ENCODE measurements at regions of chr1 and their contacts with region 1.

Region 1: GRCh38 chr1:197521118-197521739 is 253.2 kb downstream of the CRB1 start:
- DNase-seq: peak in 3 of 9 experiments; percentile 19 to 59 (median 44)
- ATAC-seq: peak; percentile 52
- H3K4me3 ChIP-seq: no peak overlapping the region
- H3K4me3 Mint-ChIP-seq: no peak overlapping the region
- H3K27ac ChIP-seq: no peak overlapping the region
- H3K27ac Mint-ChIP-seq: no peak overlapping the region
- H3K4me1 ChIP-seq: no peaks in the 10 kb centered on the region
- H3K4me1 Mint-ChIP-seq: no peaks in the 10 kb centered on the region
- H3K27me3 ChIP-seq: no peaks in the 10 kb centered on the region
- H3K27me3 Mint-ChIP-seq: no peaks in the 10 kb centered on the region
- CTCF ChIP-seq: peak; percentile 87

Region 2: GRCh38 chr1:197180252-197180878 is 340.9 kb before region 1 on chr1:
- CTCF ChIA-PET with region 1: interaction called, 7 read pairs
- POLR2A ChIA-PET with region 1: no interaction called
- intact Hi-C with region 1: loop called (anchors 5 to 10 kb)
- DNase-seq: peak in 2 of 9 experiments; percentile 40 to 59
- ATAC-seq: peak; percentile 62
- H3K4me3 ChIP-seq: no peak overlapping the region
- H3K4me3 Mint-ChIP-seq: no peak overlapping the region
- H3K27ac ChIP-seq: no peak overlapping the region
- H3K27ac Mint-ChIP-seq: no peak overlapping the region
- H3K4me1 ChIP-seq: no peaks in the 10 kb centered on the region
- H3K4me1 Mint-ChIP-seq: peaks cover 13% of the 10 kb centered on the region
- H3K27me3 ChIP-seq: no peaks in the 10 kb centered on the region
- H3K27me3 Mint-ChIP-seq: no peaks in the 10 kb centered on the region
- CTCF ChIP-seq: peak; percentile 66

Region 3: GRCh38 chr1:197374428-197374827 is 146.8 kb before region 1 on chr1:
- CTCF ChIA-PET with region 1: no interaction called
- POLR2A ChIA-PET with region 1: no interaction called
- intact Hi-C with region 1: no loop called
- DNase-seq: no peak
- ATAC-seq: peak; percentile 31
- H3K4me3 ChIP-seq: no peak overlapping the region
- H3K4me3 Mint-ChIP-seq: no peak overlapping the region
- H3K27ac ChIP-seq: no peak overlapping the region
- H3K27ac Mint-ChIP-seq: no peak overlapping the region
- H3K4me1 ChIP-seq: no peaks in the 10 kb centered on the region
- H3K4me1 Mint-ChIP-seq: peaks cover 6% of the 10 kb centered on the region
- H3K27me3 ChIP-seq: no peaks in the 10 kb centered on the region
- H3K27me3 Mint-ChIP-seq: peaks cover 3% of the 10 kb centered on the region
- CTCF ChIP-seq: no peak

Region 4: DNA sequence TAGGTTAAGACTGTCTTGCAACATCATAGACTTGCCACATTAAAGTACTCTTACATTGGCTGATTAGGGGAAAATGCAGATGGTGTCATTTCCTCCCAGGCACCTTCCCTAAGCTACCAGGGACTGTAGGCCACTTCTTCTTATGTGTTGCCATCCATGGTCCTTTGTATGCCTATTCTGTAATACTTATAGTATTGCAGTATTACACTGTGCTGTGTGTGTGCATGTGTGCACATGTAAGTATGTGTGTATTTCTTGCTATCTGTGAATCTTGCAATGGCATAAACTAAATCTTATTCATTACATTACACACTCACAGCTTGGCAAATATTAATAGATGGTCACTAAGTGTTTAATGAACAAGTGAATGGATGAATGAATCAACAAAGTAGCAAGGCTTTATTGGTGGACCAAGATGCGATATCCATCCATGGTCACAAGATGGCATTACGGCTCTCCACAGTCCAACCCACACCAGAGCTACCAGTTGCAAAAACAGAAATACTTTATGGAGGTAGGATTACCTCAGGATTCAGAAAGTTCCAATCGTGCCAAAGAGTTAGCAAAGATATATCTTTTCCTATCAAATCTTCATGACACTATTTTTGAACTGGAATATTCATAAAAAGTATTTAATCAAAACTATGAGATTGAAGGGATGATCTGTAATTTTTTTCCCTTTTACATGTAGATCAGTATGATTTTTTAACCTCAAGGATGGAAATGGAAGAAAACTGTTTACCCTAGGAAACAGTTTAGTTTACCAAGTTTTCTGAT is 93.9 kb after region 1 on chr1:
- CTCF ChIA-PET with region 1: interaction called, 3 read pairs
- POLR2A ChIA-PET with region 1: no interaction called
- intact Hi-C with region 1: loop called in 1 of 2 experiments (anchors 5 kb)
- DNase-seq: peak in 4 of 9 experiments; percentile 7 to 49 (median 28)
- ATAC-seq: peak; percentile 46
- H3K4me3 ChIP-seq: no peak overlapping the region
- H3K4me3 Mint-ChIP-seq: no peak overlapping the region
- H3K27ac ChIP-seq: no peak overlapping the region
- H3K27ac Mint-ChIP-seq: no peak overlapping the region
- H3K4me1 ChIP-seq: no peaks in the 10 kb centered on the region
- H3K4me1 Mint-ChIP-seq: no peaks in the 10 kb centered on the region
- H3K27me3 ChIP-seq: no peaks in the 10 kb centered on the region
- H3K27me3 Mint-ChIP-seq: no peaks in the 10 kb centered on the region
- CTCF ChIP-seq: peak; percentile 49

Region 5: DNA sequence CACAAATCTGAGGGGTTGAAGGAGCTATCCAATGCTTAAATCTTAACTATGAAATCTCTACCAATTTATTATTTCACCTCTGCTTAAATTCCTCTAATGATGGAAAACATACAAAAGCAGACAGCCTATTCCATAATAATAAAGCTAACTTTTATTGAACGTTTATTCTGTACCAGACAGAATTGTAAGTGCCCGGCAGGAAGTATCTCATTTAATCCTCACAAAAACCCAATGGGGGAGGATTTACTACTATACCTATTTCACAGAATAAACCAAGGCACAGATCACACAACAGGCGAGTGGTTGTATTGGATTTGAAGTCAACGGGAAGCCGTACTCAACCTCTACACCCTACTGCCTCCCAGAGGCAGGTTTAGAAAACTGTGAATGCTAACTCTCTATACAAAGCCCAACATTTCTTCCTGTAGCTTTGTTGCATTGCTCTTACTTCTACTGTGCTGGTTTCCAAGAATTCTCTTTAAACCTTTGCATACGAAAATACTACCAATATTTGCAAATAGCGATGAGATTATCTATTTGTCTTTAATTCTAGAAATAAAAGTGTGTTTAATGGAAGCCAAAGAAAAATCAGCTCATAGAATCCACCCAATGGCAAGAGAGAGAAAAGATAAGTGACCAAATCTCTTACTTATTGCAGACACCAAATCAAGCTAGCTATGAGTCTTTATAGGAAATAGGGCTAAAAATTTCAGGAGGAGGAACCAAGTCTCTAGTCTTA is 347.7 kb after region 1 on chr1:
- CTCF ChIA-PET with region 1: interaction called, 22 read pairs
- POLR2A ChIA-PET with region 1: no interaction called
- intact Hi-C with region 1: loop called (anchors 1 to 5 kb)
- DNase-seq: peak in 6 of 9 experiments; percentile 2 to 66 (median 30)
- ATAC-seq: peak; percentile 91
- H3K4me3 ChIP-seq: no peak overlapping the region
- H3K4me3 Mint-ChIP-seq: no peak overlapping the region
- H3K27ac ChIP-seq: no peak overlapping the region
- H3K27ac Mint-ChIP-seq: no peak overlapping the region
- H3K4me1 ChIP-seq: no peaks in the 10 kb centered on the region
- H3K4me1 Mint-ChIP-seq: no peaks in the 10 kb centered on the region
- H3K27me3 ChIP-seq: no peaks in the 10 kb centered on the region
- H3K27me3 Mint-ChIP-seq: peaks cover 6% of the 10 kb centered on the region
- CTCF ChIP-seq: peak; percentile 79

Region 6: DNA sequence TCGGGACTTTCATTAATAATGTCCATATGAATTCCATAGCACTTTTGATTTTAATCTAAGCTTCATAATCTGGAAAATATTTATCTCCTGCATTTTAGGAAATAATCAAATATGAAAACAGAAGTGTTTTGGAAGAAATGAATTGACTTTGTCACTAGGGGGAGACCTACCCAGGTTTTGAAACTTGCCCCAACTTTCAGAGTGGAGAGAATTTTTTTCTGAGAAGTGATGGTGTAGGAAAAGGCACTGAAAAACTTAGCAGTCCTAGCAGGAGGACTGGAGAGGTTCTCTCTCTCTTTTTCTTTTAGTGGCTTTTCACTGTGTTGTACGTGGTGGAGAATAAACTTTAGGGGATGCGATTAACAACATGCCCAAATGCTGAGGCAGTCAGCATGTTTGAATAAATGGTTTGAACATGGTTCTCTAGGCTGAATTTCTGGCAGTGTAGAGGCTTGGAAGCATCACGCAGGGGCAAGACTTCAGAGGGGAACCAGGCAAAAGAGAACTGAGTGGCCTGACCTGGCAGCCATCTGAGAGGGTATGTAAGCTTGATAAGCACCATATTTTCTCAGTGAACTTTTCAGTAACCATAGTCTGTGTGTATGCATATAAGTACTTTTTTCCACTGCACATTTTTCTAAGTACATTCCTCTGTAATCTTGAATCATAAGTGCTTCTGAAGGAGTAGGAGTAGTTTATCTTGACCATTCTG is 567.3 kb after region 1 on chr1:
- CTCF ChIA-PET with region 1: no interaction called
- POLR2A ChIA-PET with region 1: no interaction called
- intact Hi-C with region 1: loop called (anchors 10 kb)
- DNase-seq: peak in 4 of 9 experiments; percentile 7 to 66 (median 30)
- ATAC-seq: peak; percentile 51
- H3K4me3 ChIP-seq: no peak overlapping the region
- H3K4me3 Mint-ChIP-seq: no peak overlapping the region
- H3K27ac ChIP-seq: no peak overlapping the region
- H3K27ac Mint-ChIP-seq: no peak overlapping the region
- H3K4me1 ChIP-seq: no peaks in the 10 kb centered on the region
- H3K4me1 Mint-ChIP-seq: peaks cover 3% of the 10 kb centered on the region
- H3K27me3 ChIP-seq: no peaks in the 10 kb centered on the region
- H3K27me3 Mint-ChIP-seq: no peaks in the 10 kb centered on the region
- CTCF ChIP-seq: peak; percentile 78

Region 7: GRCh38 chr1:198275597-198275996 is 754.4 kb after region 1 on chr1:
- CTCF ChIA-PET with region 1: no interaction called
- POLR2A ChIA-PET with region 1: no interaction called
- intact Hi-C with region 1: loop called in 1 of 2 experiments (anchors 10 kb)
- DNase-seq: peak in 1 of 9 experiments; percentile 28
- ATAC-seq: no peak
- H3K4me3 ChIP-seq: no peak overlapping the region
- H3K4me3 Mint-ChIP-seq: no peak overlapping the region
- H3K27ac ChIP-seq: no peak overlapping the region
- H3K27ac Mint-ChIP-seq: no peak overlapping the region
- H3K4me1 ChIP-seq: no peaks in the 10 kb centered on the region
- H3K4me1 Mint-ChIP-seq: peaks cover 12% of the 10 kb centered on the region
- H3K27me3 ChIP-seq: no peaks in the 10 kb centered on the region
- H3K27me3 Mint-ChIP-seq: no peaks in the 10 kb centered on the region
- CTCF ChIP-seq: no peak

Region 8: DNA sequence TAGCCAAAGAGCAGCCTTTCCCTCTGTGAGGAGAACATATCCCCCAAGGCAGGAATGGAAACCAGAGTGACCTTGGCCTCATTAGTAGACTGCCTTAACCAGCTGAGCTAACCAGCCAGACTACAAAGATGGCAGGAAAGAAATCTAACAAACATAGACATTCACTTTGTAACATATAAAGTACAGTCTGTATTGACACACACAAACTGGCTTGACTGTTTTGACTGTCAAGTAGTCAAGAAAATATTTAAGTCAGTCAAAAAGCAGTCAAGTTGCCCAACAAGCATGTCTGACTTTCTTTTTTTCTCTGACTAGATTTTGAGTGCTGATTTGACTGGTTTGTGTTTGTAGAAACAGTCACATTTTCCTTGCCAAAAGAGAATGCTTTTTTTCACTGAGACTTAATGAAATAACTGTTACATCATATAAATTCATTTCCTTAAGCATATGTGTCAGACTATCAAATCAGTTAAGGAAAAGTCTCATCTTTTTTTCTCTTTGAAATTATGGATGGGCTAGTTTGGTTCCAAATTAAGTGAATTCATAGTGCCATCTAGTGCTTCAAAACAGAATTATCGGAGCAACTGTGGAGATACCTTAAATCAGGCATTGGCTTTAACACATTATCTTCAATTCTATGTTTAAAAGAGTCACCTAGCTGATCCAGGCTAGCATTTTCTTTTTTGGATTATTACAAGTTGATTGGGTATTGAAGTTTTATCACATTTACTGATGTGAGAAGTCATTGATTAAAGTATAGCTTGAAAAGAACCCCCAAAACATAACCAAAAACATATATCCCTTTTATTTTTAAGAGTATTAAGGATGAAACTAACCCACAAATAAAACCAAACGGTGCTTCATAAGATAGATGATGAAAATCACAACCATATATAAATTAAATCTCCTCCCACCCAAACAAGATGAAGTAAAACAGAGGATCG is 944.2 kb after region 1 on chr1:
- CTCF ChIA-PET with region 1: interaction called, 4 read pairs
- POLR2A ChIA-PET with region 1: no interaction called
- intact Hi-C with region 1: loop called (anchors 1 to 2 kb)
- DNase-seq: peak in 2 of 9 experiments; percentile 52 to 64
- ATAC-seq: peak; percentile 58
- H3K4me3 ChIP-seq: no peak overlapping the region
- H3K4me3 Mint-ChIP-seq: no peak overlapping the region
- H3K27ac ChIP-seq: no peak overlapping the region
- H3K27ac Mint-ChIP-seq: no peak overlapping the region
- H3K4me1 ChIP-seq: no peaks in the 10 kb centered on the region
- H3K4me1 Mint-ChIP-seq: peaks cover 3% of the 10 kb centered on the region
- H3K27me3 ChIP-seq: no peaks in the 10 kb centered on the region
- H3K27me3 Mint-ChIP-seq: no peaks in the 10 kb centered on the region
- CTCF ChIP-seq: peak; percentile 75

Measured in CD8-positive, alpha-beta T cell (primary cell).